PC-9 (cell line): ENCODE measurements at regions of chr1 and their contacts with region 1.

Region 1: DNA sequence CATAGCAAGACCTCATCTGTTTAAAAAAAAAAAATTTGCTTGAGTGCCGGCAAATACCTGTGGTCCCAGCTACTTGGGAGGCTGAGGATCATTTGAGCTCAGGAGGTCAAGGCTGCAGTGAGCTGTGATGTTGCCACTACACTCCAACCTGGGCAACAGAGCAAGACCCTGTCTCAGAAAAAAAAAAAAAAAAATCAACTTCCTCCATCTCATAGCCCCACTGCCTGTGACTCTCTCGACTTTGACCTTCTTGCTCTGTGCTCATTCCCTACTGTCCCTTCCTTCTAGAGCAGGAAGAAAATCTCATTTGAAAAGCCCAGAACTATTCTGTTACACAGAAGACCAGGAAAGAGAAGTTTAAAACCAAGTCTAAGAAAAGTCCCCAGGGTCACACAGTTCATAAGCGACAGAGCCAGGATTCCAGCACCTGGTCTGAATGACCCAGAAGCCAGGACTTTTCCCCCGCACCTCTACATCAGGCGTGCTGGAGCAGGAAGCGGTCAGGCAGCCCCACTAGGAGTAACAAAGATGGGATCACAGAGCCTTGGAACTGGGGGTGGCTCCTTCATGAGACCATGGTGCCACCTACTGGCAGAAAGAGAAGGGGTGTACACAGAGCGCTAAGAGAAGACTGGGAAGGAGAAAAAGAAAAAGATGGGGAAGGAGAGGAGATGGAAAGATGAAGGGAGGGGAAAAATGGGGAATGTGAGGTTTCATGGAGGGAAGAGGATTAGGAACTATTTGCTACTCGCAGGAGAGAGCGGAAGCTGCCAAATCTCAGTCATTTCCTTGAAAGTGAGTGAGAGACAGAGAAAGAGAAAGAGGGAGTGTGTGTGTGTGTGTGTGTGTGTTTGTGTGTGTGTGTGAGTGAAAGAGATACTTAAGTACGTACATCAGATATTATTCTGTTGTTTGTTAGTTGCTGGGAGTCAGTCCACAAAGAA is 3.1 kb upstream of the P3R3URF start:
- DNase-seq: peak; percentile 74 to 88
- H3K4me3 ChIP-seq: peak overlapping the region; percentile 83; the same call in 1 of the 2 replicates
- H3K27ac ChIP-seq: peak overlapping the region; percentile 91
- H3K4me1 ChIP-seq: peaks cover 65% of the 10 kb centered on the region
- H3K27me3 ChIP-seq: no peaks in the 10 kb centered on the region
- CTCF ChIP-seq: peak; percentile 95

Region 2: GRCh38 chr1:45750298-45751038 is 428.9 kb before region 1 on chr1 and contains the start of gene IPP:
- CTCF ChIA-PET with region 1: no interaction called
- POLR2A ChIA-PET with region 1: no interaction called
- intact Hi-C with region 1: loop called (anchors 1 kb)
- DNase-seq: peak; percentile 92 to 99
- H3K4me3 ChIP-seq: peak within 1 kb of the TSS; percentile 75
- H3K27ac ChIP-seq: peak within 1 kb of the TSS; percentile 78
- H3K4me1 ChIP-seq: peaks cover 11% of the 10 kb centered on the region
- H3K27me3 ChIP-seq: no peaks in the 10 kb centered on the region
- CTCF ChIP-seq: no peak
- total RNA-seq, gene IPP: 25.2 and 25.4 TPM in 2 replicates

Region 3: DNA sequence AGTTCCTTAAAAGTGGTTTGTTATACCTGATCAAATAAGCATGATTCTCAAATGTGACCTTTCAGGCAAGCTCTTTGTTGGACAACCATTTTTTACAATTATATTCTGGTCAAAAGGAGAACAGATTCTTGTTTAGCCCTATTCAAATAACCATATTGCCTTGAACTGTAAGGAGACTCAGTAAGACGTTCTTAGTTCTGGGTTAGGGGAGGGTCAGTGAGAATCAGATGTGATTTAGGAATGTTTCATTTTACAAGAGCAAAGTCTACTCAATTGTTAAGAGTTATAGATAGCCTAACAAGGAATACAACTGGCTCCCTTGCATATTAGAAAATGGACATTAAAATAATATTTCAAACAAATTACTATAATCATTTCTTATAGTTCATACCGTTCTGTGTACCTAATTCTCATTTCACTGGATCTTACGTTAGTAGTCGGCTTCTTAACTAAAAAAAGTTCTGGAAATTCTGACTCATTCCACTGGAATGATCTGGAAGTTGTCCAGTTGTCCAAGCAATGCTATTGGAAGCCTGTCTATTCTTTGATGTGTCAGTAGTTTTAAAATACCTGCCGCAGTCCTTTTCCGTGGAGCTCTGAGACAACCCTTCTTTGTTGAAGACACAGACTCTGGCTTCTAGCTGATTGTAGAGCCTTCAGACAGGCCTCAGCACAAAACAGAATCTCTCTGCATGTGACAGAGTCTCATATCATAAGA is 287.2 kb before region 1 on chr1:
- CTCF ChIA-PET with region 1: no interaction called
- POLR2A ChIA-PET with region 1: no interaction called
- intact Hi-C with region 1: loop called (anchors 2 kb)
- DNase-seq: peak; percentile 42 to 74
- H3K4me3 ChIP-seq: no peak overlapping the region
- H3K27ac ChIP-seq: peak overlapping the region; percentile 28
- H3K4me1 ChIP-seq: 0 out of 2 replicates have a peak, but pooled peaks cover 9% of the 10 kb centered on the region
- H3K27me3 ChIP-seq: no peaks in the 10 kb centered on the region
- CTCF ChIP-seq: no peak

Region 4: GRCh38 chr1:46132529-46133180 is 46.8 kb before region 1 on chr1 and contains the start of gene PIK3R3:
- CTCF ChIA-PET with region 1: interaction called, 3 read pairs
- POLR2A ChIA-PET with region 1: interaction called, 6 read pairs
- intact Hi-C with region 1: loop called (anchors 1 kb)
- DNase-seq: peak; percentile 95 to 99
- H3K4me3 ChIP-seq: peak within 1 kb of the TSS; percentile 95
- H3K27ac ChIP-seq: peak within 1 kb of the TSS; percentile 98
- H3K4me1 ChIP-seq: peaks cover 60% of the 10 kb centered on the region
- H3K27me3 ChIP-seq: no peaks in the 10 kb centered on the region
- CTCF ChIP-seq: no peak
- total RNA-seq, gene PIK3R3: 19.6 and 44.2 TPM in 2 replicates

Region 5: DNA sequence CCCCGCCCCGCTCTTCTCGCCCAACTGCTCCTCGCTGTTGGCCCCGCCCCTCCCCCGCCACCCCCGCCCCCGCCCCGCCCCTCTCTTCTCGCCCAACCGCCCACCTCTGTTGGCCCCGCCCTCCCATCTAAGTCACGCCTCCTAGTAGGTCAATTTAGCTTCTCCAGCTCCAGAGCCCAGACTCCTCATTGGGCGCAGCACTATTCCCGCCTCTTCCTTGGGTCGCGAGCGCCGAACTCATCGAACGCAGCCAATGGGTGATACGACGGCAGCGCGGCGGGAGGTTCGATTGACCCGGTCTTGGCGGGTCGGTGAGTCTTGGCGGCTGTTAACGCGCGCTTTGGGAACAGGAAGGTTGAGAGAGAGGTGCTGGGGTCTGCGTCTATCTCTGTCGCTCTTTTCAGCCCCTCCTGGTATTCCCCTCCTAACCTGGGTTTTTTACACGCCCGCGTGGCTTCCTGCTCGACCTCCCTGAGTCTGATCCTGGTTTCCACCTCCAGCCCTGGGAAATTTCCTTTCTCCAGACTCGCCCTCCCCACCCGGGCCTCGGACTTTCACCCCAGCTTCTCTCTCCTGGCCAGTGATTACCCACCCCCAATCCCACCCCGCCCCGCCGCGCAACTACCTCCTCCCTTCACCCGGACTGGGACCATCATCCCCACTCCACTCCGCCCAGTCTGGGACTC is 68.2 kb after region 1 on chr1 and contains the start of gene RAD54L:
- CTCF ChIA-PET with region 1: interaction called, 7 read pairs
- POLR2A ChIA-PET with region 1: interaction called, 16 read pairs
- intact Hi-C with region 1: loop called (anchors 1 kb)
- DNase-seq: peak; percentile 95 to 99
- H3K4me3 ChIP-seq: peak within 1 kb of the TSS; percentile 72
- H3K27ac ChIP-seq: peak within 1 kb of the TSS; percentile 60
- H3K4me1 ChIP-seq: peaks cover 21% of the 10 kb centered on the region
- H3K27me3 ChIP-seq: no peaks in the 10 kb centered on the region
- CTCF ChIP-seq: no peak
- total RNA-seq, gene RAD54L: 44.8 and 56.4 TPM in 2 replicates